ENCODE measurements at regions of chr7 and their contacts with region 1.

Region 1: GRCh38 chr7:125747966-125748365 is 818.3 kb upstream of the POT1 start:
- DNase-seq: no peak
- ATAC-seq: no peak
- H3K4me3 Mint-ChIP-seq: no peak overlapping the region
- H3K27ac Mint-ChIP-seq: no peak overlapping the region
- H3K4me1 Mint-ChIP-seq: no peaks in the 10 kb centered on the region
- H3K27me3 Mint-ChIP-seq: no peaks in the 10 kb centered on the region

Region 2: DNA sequence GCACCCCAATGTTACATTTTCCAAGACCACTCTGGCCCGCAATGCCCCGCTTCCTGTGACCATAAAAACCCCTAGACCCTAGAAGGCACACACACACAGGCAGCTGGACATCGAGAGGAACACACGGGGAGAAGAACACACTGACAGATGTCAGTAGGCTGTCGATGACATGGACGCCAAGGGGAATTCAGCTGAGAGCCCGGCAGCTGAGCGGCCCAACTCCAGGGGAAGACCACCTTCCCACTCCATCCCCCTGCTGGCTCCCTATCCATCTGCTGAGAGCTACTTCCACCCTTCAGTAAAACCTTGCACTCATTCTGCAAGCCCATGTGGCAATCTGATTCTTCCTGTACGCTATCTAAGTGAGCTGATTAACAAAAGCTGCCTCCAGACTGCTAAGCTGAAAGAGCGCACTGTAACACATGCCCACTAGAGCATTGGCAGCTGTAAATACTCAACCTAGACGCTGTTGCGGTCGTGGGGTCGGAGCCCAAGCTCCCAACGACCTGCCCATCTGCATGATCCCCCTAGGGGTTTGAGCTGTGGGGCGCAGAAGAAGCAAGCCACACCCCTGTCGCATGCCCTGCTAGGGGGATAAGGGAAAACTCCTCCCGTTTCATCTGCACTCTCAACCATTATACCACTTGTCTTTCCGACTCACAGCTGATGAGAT is 25.3 kb after region 1 on chr7:
- CTCF ChIA-PET with region 1: no interaction called
- POLR2A ChIA-PET with region 1: no interaction called
- intact Hi-C with region 1: loop called in 1 of 2 experiments (anchors 1 kb)
- DNase-seq: no peak
- ATAC-seq: no peak
- H3K4me3 Mint-ChIP-seq: no peak overlapping the region
- H3K27ac Mint-ChIP-seq: no peak overlapping the region
- H3K4me1 Mint-ChIP-seq: no peaks in the 10 kb centered on the region
- H3K27me3 Mint-ChIP-seq: no peaks in the 10 kb centered on the region

Measured in activated CD4-positive, alpha-beta T cell treated with anti-CD3 and anti-CD28 coated beads for 36 hours (primary cell).